Caco-2 (cell line): ENCODE measurements at regions of chr12 and their contacts with region 1.

Region 1: DNA sequence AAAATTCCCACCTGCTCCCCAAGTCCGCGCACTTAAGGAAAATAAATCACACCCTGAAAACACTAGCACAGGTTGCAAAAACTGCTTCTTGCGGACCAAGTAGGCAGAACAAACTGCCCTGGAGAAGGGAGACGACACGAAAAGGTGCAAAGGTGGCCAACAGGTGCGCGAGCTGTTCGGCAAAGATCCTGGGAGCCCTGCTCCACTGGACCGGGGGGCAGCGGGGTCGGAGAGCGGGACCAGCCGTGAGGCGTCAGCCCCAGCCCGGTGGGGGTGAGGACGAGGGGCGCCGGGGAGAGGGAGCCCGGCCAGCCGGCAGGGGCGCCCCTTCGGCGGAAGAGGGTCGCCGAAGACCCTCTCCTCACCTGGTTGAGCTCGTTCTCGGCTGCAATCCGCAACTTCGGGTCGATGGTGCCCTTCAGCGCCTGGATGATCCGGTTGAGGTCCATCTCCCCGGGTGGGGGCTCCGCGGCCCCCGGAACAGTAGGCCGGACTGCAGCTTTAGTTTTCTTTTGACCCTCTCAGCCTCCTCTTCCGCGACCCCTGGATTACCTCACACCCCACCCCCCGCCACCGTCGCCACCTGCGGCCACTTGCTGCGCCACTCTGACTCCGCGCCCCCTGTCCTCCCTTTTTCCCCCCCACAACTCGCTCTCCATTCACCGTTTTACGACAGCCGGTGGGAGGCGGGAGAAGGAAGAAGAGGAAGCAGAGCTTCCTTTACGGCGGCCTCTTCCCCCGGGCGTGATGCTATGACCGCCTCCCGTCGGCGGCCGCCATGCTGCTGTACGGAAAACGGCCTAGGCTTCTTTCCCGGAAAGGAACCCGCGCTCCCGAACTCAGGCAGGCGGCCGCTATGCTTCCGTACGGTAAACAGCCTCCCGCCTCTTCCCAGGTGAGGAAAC is at the start of gene IPO8:
- DNase-seq: peak; percentile 96 to 97
- H3K4me3 ChIP-seq: peak within 1 kb of the TSS; percentile 99
- H3K4me3 Mint-ChIP-seq: peak within 1 kb of the TSS; percentile 83
- H3K27ac Mint-ChIP-seq: peak within 1 kb of the TSS; percentile 85
- H3K4me1 ChIP-seq: peaks cover 10% of the 10 kb centered on the region
- H3K4me1 Mint-ChIP-seq: peaks cover 28% of the 10 kb centered on the region
- H3K27me3 ChIP-seq: no peaks in the 10 kb centered on the region
- H3K27me3 Mint-ChIP-seq: no peaks in the 10 kb centered on the region
- CTCF ChIP-seq: peak; percentile 49 to 65
- total RNA-seq, gene IPO8: 50.4 and 56.6 TPM in 2 replicates

Region 2: GRCh38 chr12:30515351-30515750 is 180.1 kb before region 1 on chr12:
- CTCF ChIA-PET with region 1: no interaction called
- POLR2A ChIA-PET with region 1: interaction called, 16 read pairs
- intact Hi-C with region 1: no loop called
- DNase-seq: no peak
- H3K4me3 ChIP-seq: no peak overlapping the region
- H3K4me3 Mint-ChIP-seq: no peak overlapping the region
- H3K27ac Mint-ChIP-seq: no peak overlapping the region
- H3K4me1 ChIP-seq: no peaks in the 10 kb centered on the region
- H3K4me1 Mint-ChIP-seq: no peaks in the 10 kb centered on the region
- H3K27me3 ChIP-seq: no peaks in the 10 kb centered on the region
- H3K27me3 Mint-ChIP-seq: no peaks in the 10 kb centered on the region
- CTCF ChIP-seq: peak in 1 of 2 experiments; percentile 19

Region 3: GRCh38 chr12:30754709-30755394 is 59.4 kb after region 1 on chr12 and contains the start of gene CAPRIN2:
- CTCF ChIA-PET with region 1: interaction called, 14 read pairs
- POLR2A ChIA-PET with region 1: interaction called, 14 read pairs
- intact Hi-C with region 1: loop called (anchors 1 kb)
- DNase-seq: peak; percentile 98 to 100
- H3K4me3 ChIP-seq: peak within 1 kb of the TSS; percentile 83
- H3K4me3 Mint-ChIP-seq: peak within 1 kb of the TSS; percentile 93
- H3K27ac Mint-ChIP-seq: peak within 1 kb of the TSS; percentile 30
- H3K4me1 ChIP-seq: peaks cover 12% of the 10 kb centered on the region; the same call in 1 of the 2 replicates
- H3K4me1 Mint-ChIP-seq: peaks cover 27% of the 10 kb centered on the region
- H3K27me3 ChIP-seq: no peaks in the 10 kb centered on the region
- H3K27me3 Mint-ChIP-seq: no peaks in the 10 kb centered on the region
- CTCF ChIP-seq: peak; percentile 61 to 69
- total RNA-seq, gene CAPRIN2: 19.6 and 21.7 TPM in 2 replicates

Region 4: GRCh38 chr12:30806989-30807694 is 111.7 kb after region 1 on chr12:
- CTCF ChIA-PET with region 1: no interaction called
- POLR2A ChIA-PET with region 1: no interaction called
- intact Hi-C with region 1: loop called (anchors 1 kb)
- DNase-seq: peak in 1 of 2 experiments; percentile 74
- H3K4me3 ChIP-seq: no peak overlapping the region
- H3K4me3 Mint-ChIP-seq: no peak overlapping the region
- H3K27ac Mint-ChIP-seq: no peak overlapping the region
- H3K4me1 ChIP-seq: no peaks in the 10 kb centered on the region
- H3K4me1 Mint-ChIP-seq: no peaks in the 10 kb centered on the region
- H3K27me3 ChIP-seq: no peaks in the 10 kb centered on the region
- H3K27me3 Mint-ChIP-seq: peaks cover 6% of the 10 kb centered on the region
- CTCF ChIP-seq: peak; percentile 80 to 94

Region 5: DNA sequence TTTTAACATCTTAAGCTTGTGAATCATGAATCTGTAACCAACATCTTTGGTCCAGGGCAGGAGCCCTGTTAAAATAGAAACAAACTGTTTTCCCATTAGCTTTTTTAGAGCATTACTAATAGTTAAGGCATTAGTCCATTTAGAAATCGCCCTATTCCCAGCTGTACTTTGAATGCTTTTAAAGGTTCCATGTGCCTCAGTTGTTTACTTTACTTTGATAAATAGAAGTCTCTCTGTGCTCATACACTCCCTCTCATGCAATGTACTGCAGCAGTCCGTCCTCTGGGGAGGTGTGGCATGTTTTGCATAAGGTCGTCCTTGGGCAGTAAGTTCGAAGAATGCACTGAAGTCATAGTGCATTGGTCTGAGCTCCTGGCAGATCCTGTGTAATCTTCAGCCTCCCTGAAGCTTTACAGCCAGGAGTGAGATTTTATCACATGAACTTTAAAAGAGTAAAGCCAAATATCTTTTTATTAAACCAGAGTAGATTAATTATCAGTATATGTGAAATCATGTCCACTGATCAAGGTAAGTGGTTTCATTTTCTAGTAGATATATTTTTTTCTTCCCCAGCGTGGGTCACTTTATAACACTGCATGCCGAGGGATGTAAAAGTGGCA is 1838.6 kb after region 1 on chr12:
- CTCF ChIA-PET with region 1: no interaction called
- POLR2A ChIA-PET with region 1: interaction called, 15 read pairs
- intact Hi-C with region 1: no loop called
- DNase-seq: peak; percentile 85 to 88
- H3K4me3 ChIP-seq: no peak overlapping the region; the same call in 1 of the 2 replicates
- H3K4me3 Mint-ChIP-seq: peak overlapping the region; percentile 62
- H3K27ac Mint-ChIP-seq: peak overlapping the region; percentile 74
- H3K4me1 ChIP-seq: peaks cover 46% of the 10 kb centered on the region
- H3K4me1 Mint-ChIP-seq: peaks cover 40% of the 10 kb centered on the region
- H3K27me3 ChIP-seq: no peaks in the 10 kb centered on the region
- H3K27me3 Mint-ChIP-seq: no peaks in the 10 kb centered on the region
- CTCF ChIP-seq: no peak